Heart left ventricle (tissue), 16 donors: ENCODE measurements at regions of chr3 and their contacts with region 1.

Region 1: DNA sequence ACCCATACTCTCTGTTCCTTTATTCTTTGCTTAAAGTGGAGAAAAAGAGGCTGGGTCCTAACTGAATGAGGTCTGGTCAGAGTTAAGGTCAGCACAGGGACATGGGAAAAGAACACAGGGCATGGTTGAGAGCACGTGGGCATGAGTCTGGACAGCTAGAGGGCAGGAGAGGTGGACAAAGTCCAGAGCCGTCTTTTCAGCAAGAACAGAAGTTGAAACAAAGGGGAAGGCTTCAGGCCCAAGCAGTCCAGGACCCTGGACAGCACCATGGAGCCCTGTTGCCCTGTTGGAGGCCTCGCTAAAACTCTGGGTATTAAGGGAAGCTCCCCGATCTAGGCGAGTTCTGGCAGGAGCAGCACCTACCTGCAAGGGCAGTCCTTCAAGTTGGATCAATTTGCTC is 50.7 kb downstream of the XYLB start:
- DNase-seq: peak in 1 of 5 donors; percentile 33
- ATAC-seq: peak; percentile 37 to 64 (median 60)
- H3K4me3 ChIP-seq: no peak overlapping the region
- H3K27ac ChIP-seq: no peak overlapping the region
- H3K4me1 ChIP-seq: no peaks in the 10 kb centered on the region
- H3K27me3 ChIP-seq: no peaks in the 10 kb centered on the region
- CTCF ChIP-seq: no peak
- POLR2A ChIP-seq: no peak

Region 2: DNA sequence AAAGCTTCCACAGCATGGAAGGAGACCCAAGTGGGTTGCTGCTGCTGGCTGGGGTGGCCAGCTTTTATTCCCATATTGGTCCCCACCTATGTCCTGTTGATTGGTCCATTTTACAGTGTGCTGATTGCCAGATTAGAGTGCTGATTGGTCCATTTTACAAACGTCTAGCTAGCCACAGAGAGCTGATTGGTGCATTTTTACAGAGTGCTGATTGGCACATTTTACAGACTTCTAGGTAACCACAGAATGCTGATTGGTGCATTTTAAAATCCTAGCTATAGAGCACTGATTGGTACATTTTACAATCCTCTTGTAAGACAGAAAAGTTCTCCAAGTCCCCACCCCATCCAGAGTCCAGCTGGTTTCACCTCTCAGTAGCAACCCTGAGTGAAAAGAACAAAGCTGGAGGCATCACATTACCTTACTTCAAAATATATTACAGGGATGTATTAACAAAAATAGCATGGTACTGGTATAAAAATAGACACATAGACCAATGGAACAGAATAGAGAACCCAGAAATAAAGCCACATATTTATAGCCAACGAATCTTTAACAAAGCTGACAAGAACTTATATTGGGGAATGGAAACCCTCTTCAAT is 48.9 kb after region 1 on chr3:
- intact Hi-C with region 1: loop called in 1 of 10 experiments (anchors 10 kb)
- DNase-seq: no peak
- ATAC-seq: no peak
- H3K4me3 ChIP-seq: no peak overlapping the region
- H3K27ac ChIP-seq: no peak overlapping the region
- H3K4me1 ChIP-seq: no peaks in the 10 kb centered on the region
- H3K27me3 ChIP-seq: no peaks in the 10 kb centered on the region
- CTCF ChIP-seq: no peak
- POLR2A ChIP-seq: no peak